ENCODE measurements at regions of chr7 and their contacts with region 1.

Region 1: GRCh38 chr7:47730142-47730541 is 148.2 kb upstream of the TNS3 start:
- DNase-seq: no peak
- H3K4me3 ChIP-seq: no peak overlapping the region
- CTCF ChIP-seq: no peak
- POLR2A ChIP-seq: no peak

Region 2: DNA sequence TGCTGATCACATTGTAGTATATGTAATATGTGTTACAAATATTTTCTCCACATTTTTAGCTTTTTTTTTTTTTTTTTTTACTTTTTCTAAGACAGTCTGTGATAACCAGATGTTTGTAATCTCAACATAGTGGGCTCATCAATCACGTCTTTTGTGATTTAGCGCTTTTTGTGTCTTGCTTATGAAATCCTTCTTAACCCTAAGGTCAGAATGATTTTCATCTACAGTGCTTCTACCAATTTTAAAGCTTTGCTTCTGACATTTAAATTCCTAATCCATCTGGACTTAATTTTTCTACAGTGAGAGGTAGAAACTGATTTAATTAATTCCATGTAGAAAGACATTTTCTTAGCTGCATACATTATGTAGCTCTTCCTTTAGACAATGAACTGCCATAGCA is 774.6 kb before region 1 on chr7:
- intact Hi-C with region 1: loop called (anchors 5 kb)
- DNase-seq: no peak
- H3K4me3 ChIP-seq: no peak overlapping the region
- CTCF ChIP-seq: no peak
- POLR2A ChIP-seq: no peak

Region 3: GRCh38 chr7:47074702-47075153 is 655.4 kb before region 1 on chr7:
- intact Hi-C with region 1: no loop called
- DNase-seq: no peak
- H3K4me3 ChIP-seq: no peak overlapping the region
- CTCF ChIP-seq: no peak
- POLR2A ChIP-seq: no peak